ENCODE measurements at regions of chr2 and their contacts with region 1.

Region 1: GRCh38 chr2:121128754-121129659 is 156.0 kb downstream of the TFCP2L1 start:
- DNase-seq: peak; percentile 80
- ATAC-seq: peak; percentile 73
- H3K4me3 ChIP-seq: no peak overlapping the region
- H3K27ac ChIP-seq: no peak overlapping the region
- H3K4me1 ChIP-seq: no peaks in the 10 kb centered on the region
- H3K27me3 ChIP-seq: 0 out of 2 replicates have a peak, but pooled peaks cover 9% of the 10 kb centered on the region
- CTCF ChIP-seq: peak; percentile 92

Region 2: GRCh38 chr2:120879431-120880295 is 249.3 kb before region 1 on chr2:
- CTCF ChIA-PET with region 1: no interaction called
- POLR2A ChIA-PET with region 1: no interaction called
- intact Hi-C with region 1: no loop called
- DNase-seq: no peak
- ATAC-seq: no peak
- H3K4me3 ChIP-seq: no peak overlapping the region
- H3K27ac ChIP-seq: no peak overlapping the region
- H3K4me1 ChIP-seq: no peaks in the 10 kb centered on the region
- H3K27me3 ChIP-seq: no peaks in the 10 kb centered on the region
- CTCF ChIP-seq: 0 out of 2 replicates have a peak, but pooled peaks have one; percentile 12

Region 3: DNA sequence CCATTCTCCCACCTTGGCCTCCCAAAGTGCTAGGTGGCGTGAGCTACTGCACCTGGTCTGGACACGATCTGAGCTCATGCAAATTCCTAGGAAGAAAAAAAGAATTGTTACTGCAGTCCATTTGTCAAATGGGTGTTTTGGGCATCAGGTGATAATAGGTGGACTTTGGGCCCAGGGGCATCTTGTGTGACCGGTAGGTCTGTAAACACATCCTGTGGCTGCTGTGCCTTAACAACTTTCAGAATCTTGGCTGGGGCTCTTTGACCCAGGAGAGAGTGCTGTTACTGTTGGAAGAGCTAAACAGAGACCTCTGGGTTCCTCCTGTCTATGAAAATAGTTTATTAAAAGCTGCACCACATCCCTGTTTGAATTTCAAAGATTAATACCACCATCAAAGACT is 190.9 kb after region 1 on chr2:
- CTCF ChIA-PET with region 1: interaction called, 3 read pairs
- POLR2A ChIA-PET with region 1: no interaction called
- intact Hi-C with region 1: loop called (anchors 2 kb)
- DNase-seq: no peak
- ATAC-seq: no peak
- H3K4me3 ChIP-seq: no peak overlapping the region
- H3K27ac ChIP-seq: no peak overlapping the region
- H3K4me1 ChIP-seq: no peaks in the 10 kb centered on the region
- H3K27me3 ChIP-seq: no peaks in the 10 kb centered on the region
- CTCF ChIP-seq: no peak